ENCODE measurements at regions of chr12 and their contacts with region 1.

Region 1: DNA sequence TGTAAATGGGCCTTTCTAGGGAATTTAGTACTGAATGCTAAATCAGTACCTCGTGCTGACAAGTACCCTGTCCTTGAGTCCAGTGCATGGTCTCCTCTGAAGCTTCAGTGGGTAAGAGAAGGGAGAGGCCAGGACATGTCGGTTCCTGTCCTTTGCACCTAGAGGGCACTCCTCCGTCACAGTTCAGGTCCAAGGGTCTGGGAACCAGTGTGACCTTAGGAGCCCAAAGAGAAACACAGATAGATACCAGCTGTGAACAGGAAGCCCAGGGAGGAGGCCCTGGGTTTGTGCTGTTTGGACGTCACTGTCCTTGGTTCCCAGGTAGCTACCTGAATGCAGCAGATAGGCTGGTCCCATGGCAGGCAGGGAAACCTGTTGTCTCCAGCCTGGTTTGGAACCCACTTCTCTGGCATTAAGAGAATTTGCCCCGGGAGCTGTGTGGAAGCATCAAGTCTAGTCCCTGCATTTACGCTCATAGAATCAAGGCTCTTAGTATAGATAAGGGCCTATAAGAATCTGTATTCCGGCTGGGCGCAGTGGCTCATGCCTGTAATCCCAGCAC is 3.9 kb upstream of the FGF23 start:
- DNase-seq: peak; percentile 26 to 60 (median 51)
- H3K4me3 ChIP-seq: no peak overlapping the region
- H3K27ac ChIP-seq: no peak overlapping the region
- H3K4me1 ChIP-seq: peaks cover 0 to under 1% (median 0%) of the 10 kb centered on the region in 4 experiments
- H3K27me3 ChIP-seq: peaks cover 0 to 23% (median 6%) of the 10 kb centered on the region in 5 experiments

Region 2: DNA sequence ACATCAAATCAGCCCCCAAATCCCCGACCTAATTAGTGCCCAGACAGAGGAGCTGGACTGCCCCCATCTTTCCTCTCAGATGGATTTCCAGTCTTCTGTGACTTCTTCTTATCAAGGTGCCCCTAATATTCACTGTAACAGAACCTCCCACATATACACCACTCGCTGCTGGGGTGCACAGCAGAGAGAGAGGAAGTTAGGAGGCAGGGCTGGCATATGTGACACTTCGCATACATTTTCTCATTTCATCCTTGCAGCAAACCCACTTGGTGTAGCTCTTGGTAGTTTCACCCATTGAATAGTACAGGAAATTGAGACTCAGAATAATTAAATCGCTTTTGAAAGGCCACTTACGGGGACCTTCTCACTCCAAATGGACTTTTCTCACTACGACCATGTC is 166.3 kb before region 1 on chr12:
- CTCF ChIA-PET with region 1: no interaction called
- POLR2A ChIA-PET with region 1: no interaction called
- DNase-seq: peak in 2 of 3 donors; percentile 32 to 50
- H3K4me3 ChIP-seq: no peak overlapping the region
- H3K27ac ChIP-seq: no peak overlapping the region
- H3K4me1 ChIP-seq: peaks cover 13 to 38% (median 30%) of the 10 kb centered on the region in 4 experiments
- H3K27me3 ChIP-seq: no peaks in the 10 kb centered on the region

Region 3: GRCh38 chr12:4372653-4373052 is 10.7 kb before region 1 on chr12:
- CTCF ChIA-PET with region 1: interaction called, 11 read pairs
- POLR2A ChIA-PET with region 1: no interaction called
- DNase-seq: no peak
- H3K4me3 ChIP-seq: no peak overlapping the region
- H3K27ac ChIP-seq: no peak overlapping the region
- H3K4me1 ChIP-seq: no peaks in the 10 kb centered on the region
- H3K27me3 ChIP-seq: peaks cover 0 to 17% (median 0%) of the 10 kb centered on the region in 5 experiments

Region 4: GRCh38 chr12:4421590-4422031 is 38.2 kb after region 1 on chr12:
- CTCF ChIA-PET with region 1: interaction called, 30 read pairs
- POLR2A ChIA-PET with region 1: no interaction called
- DNase-seq: peak; percentile 33 to 45 (median 38)
- H3K4me3 ChIP-seq: no peak overlapping the region
- H3K27ac ChIP-seq: no peak overlapping the region
- H3K4me1 ChIP-seq: peaks cover 0 to 22% (median 2%) of the 10 kb centered on the region in 4 experiments
- H3K27me3 ChIP-seq: no peaks in the 10 kb centered on the region

Region 5: GRCh38 chr12:4526923-4527546 is 143.7 kb after region 1 on chr12:
- CTCF ChIA-PET with region 1: interaction called, 30 read pairs
- POLR2A ChIA-PET with region 1: no interaction called
- DNase-seq: peak; percentile 14 to 42 (median 35)
- H3K4me3 ChIP-seq: no peak overlapping the region
- H3K27ac ChIP-seq: no peak overlapping the region
- H3K4me1 ChIP-seq: no peaks in the 10 kb centered on the region
- H3K27me3 ChIP-seq: no peaks in the 10 kb centered on the region

Measured in common myeloid progenitor, CD34-positive (primary cell).